ENCODE measurements at regions of chr18 and their contacts with region 1.

Region 1: DNA sequence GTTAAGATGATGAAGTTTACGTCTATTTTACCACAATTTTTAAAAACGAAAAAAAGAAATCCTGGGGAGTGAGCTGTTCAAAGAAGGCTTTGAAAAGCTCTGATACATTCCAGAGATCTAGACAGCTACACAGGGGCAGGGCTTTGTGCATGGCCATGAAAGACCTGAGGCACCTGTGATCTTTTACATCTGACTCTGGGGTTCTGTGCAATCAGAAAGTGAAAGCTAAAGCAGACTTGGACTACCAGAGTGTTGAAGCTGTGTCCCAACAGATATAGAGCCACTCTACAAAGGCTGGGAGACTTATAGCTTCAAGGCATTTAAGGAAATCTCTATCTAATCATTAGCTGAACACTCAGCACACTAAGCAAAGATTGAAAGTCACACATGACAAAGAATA is 34.1 kb downstream of the PARD6G start:
- DNase-seq: no peak
- ATAC-seq: peak; percentile 82
- H3K4me3 ChIP-seq: peak overlapping the region; percentile 1 to 28; a peak in 2 of 4 replicates
- H3K27ac ChIP-seq: no peak overlapping the region
- H3K4me1 ChIP-seq: no peaks in the 10 kb centered on the region
- H3K27me3 ChIP-seq: peaks cover 7% of the 10 kb centered on the region; the same call in 1 of the 2 replicates
- CTCF ChIP-seq: no peak

Region 2: DNA sequence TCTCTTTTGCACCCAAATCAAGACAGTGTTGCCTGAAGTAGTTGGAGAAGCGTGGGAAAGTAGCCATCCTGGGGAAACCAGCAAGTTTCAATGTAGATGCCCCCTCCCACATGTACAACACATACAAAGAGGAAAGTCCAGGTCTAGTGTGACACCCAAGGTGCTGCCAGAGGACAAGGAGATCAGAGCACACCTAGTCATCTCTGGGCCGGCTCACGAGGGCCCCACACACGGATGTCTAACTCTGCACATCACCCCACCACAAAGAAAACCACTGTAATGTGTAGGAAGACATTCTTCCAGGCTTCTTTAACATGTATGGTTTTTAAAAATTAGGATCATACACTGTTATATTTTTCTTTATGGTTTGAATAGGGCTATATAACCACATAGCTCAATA is 12.5 kb after region 1 on chr18:
- CTCF ChIA-PET with region 1: interaction called, 12 read pairs
- POLR2A ChIA-PET with region 1: no interaction called
- in situ Hi-C with region 1: no loop called
- intact Hi-C with region 1: no loop called
- DNase-seq: no peak
- ATAC-seq: no peak
- H3K4me3 ChIP-seq: no peak overlapping the region
- H3K27ac ChIP-seq: no peak overlapping the region
- H3K4me1 ChIP-seq: no peaks in the 10 kb centered on the region
- H3K27me3 ChIP-seq: no peaks in the 10 kb centered on the region
- CTCF ChIP-seq: no peak